Dendritic cell treated with granulocyte-macrophage colony-stimulating factor and Interleukin-4, amounts not matched to agents 40 ng/mL and 50 ng/mL, for 4 days (primary cell): ENCODE measurements at regions of chr4 and their contacts with region 1.

Region 1: GRCh38 chr4:107913281-107913899 is 18.0 kb upstream of the CYP2U1 start:
- H3K4me3 Mint-ChIP-seq: no peak overlapping the region
- H3K27ac Mint-ChIP-seq: no peak overlapping the region
- H3K4me1 Mint-ChIP-seq: peaks cover 9% of the 10 kb centered on the region
- H3K27me3 Mint-ChIP-seq: no peaks in the 10 kb centered on the region

Region 2: DNA sequence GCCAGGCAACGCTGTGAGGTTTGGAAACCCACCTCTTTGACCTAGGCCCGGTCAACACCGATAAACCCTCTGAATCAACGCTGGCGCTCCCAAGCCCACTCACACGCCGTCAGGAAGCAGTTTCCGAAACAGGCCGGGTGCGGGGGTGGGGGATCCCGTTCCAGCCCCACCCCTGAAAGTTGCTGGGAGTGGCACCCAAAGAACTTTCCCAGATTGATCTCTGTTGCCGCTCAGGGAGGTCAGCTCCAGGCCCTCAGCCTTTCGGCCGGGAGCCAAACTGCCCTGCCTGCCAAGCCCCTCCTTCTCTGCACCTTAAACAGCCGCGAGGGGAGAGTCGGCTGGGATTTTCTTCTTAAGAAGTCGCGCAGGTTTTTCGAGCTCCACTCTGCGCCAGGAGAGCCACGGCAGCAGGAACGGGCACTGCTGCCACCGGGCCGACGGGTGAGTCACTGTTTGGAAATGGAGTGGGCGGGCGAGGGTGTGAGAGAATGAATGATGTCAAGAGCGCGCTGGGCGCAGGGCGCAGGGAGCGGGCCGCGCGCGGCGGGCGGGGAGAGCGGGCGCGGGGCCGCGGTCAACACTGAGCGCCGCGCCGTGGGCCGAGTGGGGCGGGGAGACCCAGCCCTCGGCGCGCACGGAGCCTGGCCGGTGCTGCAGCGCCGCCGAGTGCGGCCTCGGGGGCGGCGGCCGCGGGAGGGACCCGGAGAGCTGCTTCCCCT is 88.9 kb before region 1 on chr4 and contains the start of gene SGMS2:
- intact Hi-C with region 1: loop called (anchors 5 kb)
- H3K4me3 Mint-ChIP-seq: peak within 1 kb of the TSS; percentile 95
- H3K27ac Mint-ChIP-seq: peak within 1 kb of the TSS; percentile 94
- H3K4me1 Mint-ChIP-seq: peaks cover 49% of the 10 kb centered on the region
- H3K27me3 Mint-ChIP-seq: peaks cover 2% of the 10 kb centered on the region